ENCODE measurements at regions of chr3 and their contacts with region 1.

Region 1: DNA sequence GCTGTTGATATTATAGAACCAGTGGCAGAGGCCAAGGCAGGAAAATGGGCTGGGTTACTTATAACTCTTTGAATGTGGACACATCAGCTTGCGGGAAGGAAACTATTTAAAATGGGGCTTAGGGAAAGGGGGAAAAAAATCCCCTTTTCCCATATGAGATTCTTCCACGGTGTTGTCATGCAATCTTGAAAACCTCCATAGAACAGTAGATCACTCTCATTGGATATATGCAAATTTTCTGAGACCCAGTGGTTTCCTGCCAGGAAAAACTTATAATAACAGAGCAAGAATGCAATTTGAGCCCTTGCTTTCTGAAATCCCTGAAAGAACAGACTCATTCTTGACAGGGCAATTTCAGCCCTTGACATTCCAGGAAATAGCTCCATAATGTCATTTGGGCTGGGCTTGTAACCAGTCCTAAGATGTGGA is 31.1 kb downstream of the TMEM212 start:
- DNase-seq: peak; percentile 99
- H3K4me3 ChIP-seq: no peak overlapping the region
- H3K27me3 ChIP-seq: no peaks in the 10 kb centered on the region
- CTCF ChIP-seq: no peak

Region 2: GRCh38 chr3:171755015-171755589 is 119.2 kb before region 1 on chr3:
- CTCF ChIA-PET with region 1: no interaction called
- POLR2A ChIA-PET with region 1: no interaction called
- DNase-seq: no peak
- H3K4me3 ChIP-seq: no peak overlapping the region
- H3K27me3 ChIP-seq: no peaks in the 10 kb centered on the region
- CTCF ChIP-seq: no peak

Region 3: DNA sequence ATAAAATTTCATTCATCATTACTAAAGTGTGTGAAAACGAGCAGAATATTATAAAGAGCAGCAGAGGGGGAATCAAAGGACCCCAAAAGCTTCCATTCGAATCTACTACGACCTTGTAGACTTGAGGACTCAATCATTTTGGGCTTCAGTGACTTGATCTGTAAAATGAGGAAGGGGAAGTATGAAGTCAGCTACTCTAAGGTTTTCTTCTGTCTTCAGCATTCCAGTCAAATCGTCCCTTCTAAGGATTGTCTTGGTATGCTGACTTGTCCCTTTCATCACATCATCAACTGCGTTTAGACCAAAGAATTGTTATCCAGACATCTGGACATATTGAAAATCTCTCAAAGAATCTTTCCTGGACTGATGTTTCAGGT is 108.8 kb before region 1 on chr3:
- CTCF ChIA-PET with region 1: no interaction called
- POLR2A ChIA-PET with region 1: no interaction called
- DNase-seq: no peak
- H3K4me3 ChIP-seq: no peak overlapping the region
- H3K27me3 ChIP-seq: no peaks in the 10 kb centered on the region
- CTCF ChIP-seq: no peak

Region 4: GRCh38 chr3:172040078-172040980 is 166.1 kb after region 1 on chr3:
- CTCF ChIA-PET with region 1: no interaction called
- POLR2A ChIA-PET with region 1: interaction called, 14 read pairs
- DNase-seq: peak; percentile 38
- H3K4me3 ChIP-seq: peak overlapping the region; percentile 89
- H3K27me3 ChIP-seq: no peaks in the 10 kb centered on the region
- CTCF ChIP-seq: peak; percentile 38